ENCODE measurements at regions of chr3 and their contacts with region 1.

Region 1: GRCh38 chr3:50235716-50236496 is at the start of gene GNAI2:
- DNase-seq: peak; percentile 97 to 99 (median 97)
- H3K4me3 ChIP-seq: peak within 1 kb of the TSS; percentile 61 to 100 (median 97)
- H3K4me3 Mint-ChIP-seq: peak within 1 kb of the TSS; percentile 99 to 100
- H3K27ac ChIP-seq: peak within 1 kb of the TSS; percentile 98 to 100
- H3K27ac Mint-ChIP-seq: peak within 1 kb of the TSS; percentile 93 to 98 (median 95)
- H3K4me1 ChIP-seq: peaks cover 72 to 76% of the 10 kb centered on the region in 2 donors
- H3K4me1 Mint-ChIP-seq: peaks cover 67% of the 10 kb centered on the region
- H3K27me3 ChIP-seq: no peaks in the 10 kb centered on the region
- H3K27me3 Mint-ChIP-seq: peaks cover 0 to 1% (median 0%) of the 10 kb centered on the region in 3 donors
- CTCF ChIP-seq: no peak
- polyA plus RNA-seq, gene GNAI2: 914 to 1,492 (median 1,165) TPM

Region 2: GRCh38 chr3:50245831-50246516 is 10.1 kb after region 1 on chr3:
- intact Hi-C with region 1: loop called (anchors 1 kb)
- DNase-seq: peak; percentile 83 to 89 (median 84)
- H3K4me3 ChIP-seq: peak overlapping the region; percentile 22 to 73 (median 28)
- H3K4me3 Mint-ChIP-seq: peak overlapping the region; percentile 74 to 88
- H3K27ac ChIP-seq: peak overlapping the region; percentile 98 to 100
- H3K27ac Mint-ChIP-seq: peak overlapping the region; percentile 96 to 98 (median 98)
- H3K4me1 ChIP-seq: peaks cover 88 to 91% of the 10 kb centered on the region in 2 donors
- H3K4me1 Mint-ChIP-seq: peaks cover 88% of the 10 kb centered on the region
- H3K27me3 ChIP-seq: no peaks in the 10 kb centered on the region
- H3K27me3 Mint-ChIP-seq: peaks cover 0 to 3% (median 0%) of the 10 kb centered on the region in 3 donors
- CTCF ChIP-seq: peak; percentile 99

Measured in CD14-positive monocyte (primary cell).